ENCODE measurements at regions of chr2 and their contacts with region 1.

Region 1: DNA sequence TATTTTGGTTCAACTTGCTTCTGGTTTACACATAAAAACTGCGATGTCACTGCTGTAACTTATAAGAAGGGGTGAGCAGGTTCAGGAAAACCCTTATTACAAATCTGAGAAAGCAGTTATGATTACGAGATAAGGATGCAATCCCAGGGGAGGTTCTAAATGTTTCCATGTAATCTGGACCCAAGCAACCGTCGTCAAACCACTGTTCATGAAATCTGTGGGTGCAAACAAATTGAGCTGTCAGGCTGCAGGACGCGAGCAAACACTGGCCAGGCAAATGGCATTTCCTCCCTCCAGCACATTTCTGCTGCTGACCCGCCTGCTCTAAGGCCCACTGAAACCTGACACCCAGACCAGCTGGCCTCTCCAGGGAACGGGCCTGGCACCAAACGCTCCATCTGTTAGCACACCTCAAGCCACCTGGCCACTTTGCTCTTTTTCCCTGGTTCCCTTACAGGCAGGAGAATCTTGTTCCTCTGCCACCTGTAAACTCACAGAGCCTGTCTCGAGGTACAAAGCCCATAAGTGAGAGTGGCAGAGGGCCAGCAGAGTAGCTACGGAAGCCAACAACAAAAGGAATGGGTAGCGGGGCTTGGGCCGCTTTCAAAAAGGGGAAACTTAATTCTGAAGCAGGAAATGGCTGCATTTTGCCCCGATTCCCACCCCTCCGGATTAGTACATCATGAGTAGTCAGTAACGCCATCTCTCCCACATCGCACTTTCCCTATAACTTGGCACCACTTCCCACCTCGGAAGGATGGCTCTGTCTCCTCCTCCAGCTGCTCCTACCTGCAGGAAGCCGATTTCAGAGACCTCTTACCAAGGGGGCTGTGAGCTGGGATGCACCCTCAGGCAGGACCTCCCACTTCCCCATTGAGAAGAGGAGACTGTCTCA is 26.5 kb downstream of the CRACDL start:
- DNase-seq: no peak
- ATAC-seq: peak; percentile 33; the same call in 1 of the 2 replicates
- H3K4me3 ChIP-seq: no peak overlapping the region
- H3K27ac ChIP-seq: no peak overlapping the region
- H3K4me1 ChIP-seq: peaks cover 36 to 46% of the 10 kb centered on the region in 2 experiments
- H3K27me3 ChIP-seq: no peaks in the 10 kb centered on the region
- CTCF ChIP-seq: no peak
- POLR2A ChIP-seq: no peak
- RAD21 ChIP-seq: no peak

Region 2: DNA sequence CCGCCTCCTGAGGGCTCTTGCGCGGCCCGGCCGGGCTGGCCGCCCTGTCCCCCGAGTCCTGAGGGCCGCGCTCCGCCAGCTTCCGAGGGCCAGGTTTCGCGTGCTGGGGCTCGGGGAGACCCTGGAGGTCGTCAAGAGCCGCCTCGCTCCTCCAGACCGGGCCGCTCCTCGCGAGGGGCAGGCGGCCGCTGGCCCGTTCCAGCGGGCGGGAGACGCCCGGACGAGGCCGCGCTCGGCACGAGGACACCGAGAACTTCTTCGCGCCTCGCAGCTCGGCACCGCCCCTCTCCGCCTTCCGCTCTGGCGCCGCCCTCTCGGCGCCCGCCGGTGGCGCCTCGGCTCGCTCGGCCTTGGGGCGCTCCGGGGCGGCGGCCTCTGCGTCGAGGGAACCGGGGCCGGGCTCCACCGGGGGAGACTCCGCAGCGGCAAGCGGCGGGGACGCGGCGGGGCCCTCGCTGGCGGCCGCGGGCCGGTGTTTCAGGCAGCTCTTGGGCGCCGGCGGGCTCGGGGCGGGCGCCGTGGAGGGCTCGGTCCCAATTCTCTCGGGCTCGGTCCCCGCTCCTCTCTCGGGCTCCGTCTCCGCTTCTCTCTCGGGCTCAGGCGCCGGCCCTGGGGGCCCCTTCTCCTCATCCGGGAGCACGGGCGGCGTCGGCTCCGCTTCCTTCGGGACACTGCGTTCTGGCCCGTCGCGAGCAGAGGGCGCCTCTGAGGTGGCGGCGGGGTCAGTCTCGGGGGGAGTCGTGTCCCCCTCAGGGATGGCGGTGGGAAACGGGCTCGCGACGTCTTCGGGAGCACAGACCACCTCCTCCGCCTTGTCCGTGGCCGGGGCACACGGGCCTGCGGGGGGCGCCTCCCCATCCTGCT is 87.0 kb before region 1 on chr2:
- CTCF ChIA-PET with region 1: no interaction called
- POLR2A ChIA-PET with region 1: no interaction called
- RAD21 ChIA-PET with region 1: no interaction called
- intact Hi-C with region 1: loop called (anchors 10 kb)
- DNase-seq: no peak
- ATAC-seq: no peak
- H3K4me3 ChIP-seq: no peak overlapping the region
- H3K27ac ChIP-seq: no peak overlapping the region
- H3K4me1 ChIP-seq: no peaks in the 10 kb centered on the region
- H3K27me3 ChIP-seq: no peaks in the 10 kb centered on the region
- CTCF ChIP-seq: no peak
- POLR2A ChIP-seq: no peak
- RAD21 ChIP-seq: no peak

Region 3: GRCh38 chr2:99127981-99128380 is 218.4 kb after region 1 on chr2:
- CTCF ChIA-PET with region 1: no interaction called
- POLR2A ChIA-PET with region 1: no interaction called
- RAD21 ChIA-PET with region 1: no interaction called
- intact Hi-C with region 1: no loop called
- DNase-seq: no peak
- ATAC-seq: no peak
- H3K4me3 ChIP-seq: no peak overlapping the region
- H3K27ac ChIP-seq: no peak overlapping the region
- H3K4me1 ChIP-seq: no peaks in the 10 kb centered on the region
- H3K27me3 ChIP-seq: no peaks in the 10 kb centered on the region
- CTCF ChIP-seq: no peak
- POLR2A ChIP-seq: no peak
- RAD21 ChIP-seq: no peak

Measured in HCT116 (cell line).